Lower leg skin (tissue), 4 donors: ENCODE measurements at regions of chr16 and their contacts with region 1.

Region 1: DNA sequence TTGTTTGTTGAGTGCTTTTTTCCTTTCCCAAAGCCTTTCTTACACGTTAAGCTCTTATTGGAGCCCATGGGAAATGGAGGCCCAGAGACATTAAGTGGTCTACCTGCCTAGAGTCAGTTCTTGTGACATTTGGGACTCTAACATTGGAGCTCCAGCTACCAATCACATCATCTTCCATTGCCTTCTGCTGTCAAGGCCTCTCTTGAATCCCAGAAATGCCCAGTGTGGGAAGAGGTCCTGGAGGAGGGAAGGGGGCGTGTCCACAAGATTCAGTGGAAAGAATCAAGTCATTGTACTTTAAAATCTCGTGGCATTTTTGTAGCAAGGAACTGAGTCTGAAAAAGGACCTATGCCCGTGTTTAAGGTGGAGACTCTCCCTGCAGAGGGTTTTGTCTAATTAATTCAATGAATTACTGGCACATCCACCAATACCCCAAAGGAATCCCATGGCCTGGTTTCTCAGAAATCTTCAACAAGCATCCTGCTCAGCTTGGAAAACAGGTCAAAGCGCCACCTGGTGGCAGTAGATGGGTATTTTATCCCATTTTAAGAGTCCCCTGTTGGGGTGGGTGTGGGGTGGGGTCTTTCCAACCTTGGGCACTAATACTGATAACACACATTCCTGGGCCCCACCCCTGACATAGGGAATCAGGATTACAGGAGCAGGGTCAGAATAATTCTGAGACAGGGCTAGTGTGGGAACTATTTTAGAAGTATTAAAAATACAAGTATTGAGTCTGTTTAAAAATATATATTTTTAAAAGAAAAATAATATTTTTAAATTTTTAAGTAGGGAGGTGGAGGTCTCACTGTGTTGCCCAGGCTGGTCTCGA is 24.6 kb downstream of the GPT2 start:
- DNase-seq: no peak
- H3K4me3 ChIP-seq: no peak overlapping the region
- CTCF ChIP-seq: no peak
- POLR2A ChIP-seq: no peak

Region 2: DNA sequence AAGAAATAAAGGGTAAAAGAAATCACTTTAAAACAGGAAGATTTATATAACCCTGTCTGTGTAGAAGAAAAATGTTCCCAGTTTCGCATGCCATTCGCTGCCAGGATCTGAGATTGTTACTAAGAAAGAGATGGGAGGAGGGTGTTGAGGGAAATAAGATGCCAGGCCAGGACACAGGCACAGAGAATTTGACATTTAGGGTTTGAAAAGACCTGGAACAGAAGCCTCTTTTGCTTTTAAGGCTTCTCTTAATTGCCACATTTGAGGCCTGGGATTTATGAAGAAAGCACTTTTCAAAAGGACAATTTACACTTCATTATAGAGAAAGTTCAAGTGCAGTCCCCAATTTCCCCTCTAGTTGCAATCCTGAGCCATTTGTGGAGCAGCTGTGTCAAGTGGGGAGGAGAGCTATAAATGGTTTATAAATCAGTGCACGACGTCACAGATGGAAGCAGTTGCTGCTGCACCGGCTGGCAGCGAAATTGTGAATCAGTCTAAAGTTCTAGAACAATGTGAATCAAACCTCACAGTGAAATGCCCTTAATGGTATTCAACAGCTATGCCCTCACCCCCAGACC is 51.3 kb before region 1 on chr16:
- intact Hi-C with region 1: loop called (anchors 5 kb)
- DNase-seq: no peak
- H3K4me3 ChIP-seq: no peak overlapping the region
- CTCF ChIP-seq: no peak
- POLR2A ChIP-seq: no peak

Region 3: GRCh38 chr16:47578573-47578972 is 669.8 kb after region 1 on chr16:
- intact Hi-C with region 1: no loop called
- DNase-seq: no peak
- H3K4me3 ChIP-seq: no peak overlapping the region
- CTCF ChIP-seq: no peak
- POLR2A ChIP-seq: no peak